ENCODE measurements at regions of chr18 and their contacts with region 1.

Region 1: DNA sequence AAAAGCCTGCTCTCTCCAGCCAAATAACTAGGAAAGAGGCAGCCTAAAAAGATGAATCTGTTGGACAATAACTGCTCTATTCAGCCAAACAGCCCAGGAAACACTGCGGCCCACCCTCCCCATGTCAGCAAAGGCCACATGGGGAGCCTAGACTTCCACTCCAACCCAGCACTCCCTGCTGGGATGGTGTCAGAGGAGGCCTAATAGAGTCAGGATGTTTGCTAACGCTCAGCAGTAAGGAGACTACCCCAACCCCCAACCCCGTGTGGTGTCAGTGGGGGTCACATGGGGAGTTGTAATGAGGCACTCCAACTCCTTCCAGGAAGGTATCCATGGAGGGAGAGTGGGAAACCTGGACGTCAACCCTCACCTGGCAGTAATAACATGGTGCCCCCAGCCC is 41.6 kb downstream of the ZBTB7C start:
- DNase-seq: no peak
- ATAC-seq: no peak
- H3K4me3 ChIP-seq: no peak overlapping the region
- H3K27ac ChIP-seq: no peak overlapping the region
- H3K4me1 ChIP-seq: no peaks in the 10 kb centered on the region
- H3K27me3 ChIP-seq: no peaks in the 10 kb centered on the region

Region 2: DNA sequence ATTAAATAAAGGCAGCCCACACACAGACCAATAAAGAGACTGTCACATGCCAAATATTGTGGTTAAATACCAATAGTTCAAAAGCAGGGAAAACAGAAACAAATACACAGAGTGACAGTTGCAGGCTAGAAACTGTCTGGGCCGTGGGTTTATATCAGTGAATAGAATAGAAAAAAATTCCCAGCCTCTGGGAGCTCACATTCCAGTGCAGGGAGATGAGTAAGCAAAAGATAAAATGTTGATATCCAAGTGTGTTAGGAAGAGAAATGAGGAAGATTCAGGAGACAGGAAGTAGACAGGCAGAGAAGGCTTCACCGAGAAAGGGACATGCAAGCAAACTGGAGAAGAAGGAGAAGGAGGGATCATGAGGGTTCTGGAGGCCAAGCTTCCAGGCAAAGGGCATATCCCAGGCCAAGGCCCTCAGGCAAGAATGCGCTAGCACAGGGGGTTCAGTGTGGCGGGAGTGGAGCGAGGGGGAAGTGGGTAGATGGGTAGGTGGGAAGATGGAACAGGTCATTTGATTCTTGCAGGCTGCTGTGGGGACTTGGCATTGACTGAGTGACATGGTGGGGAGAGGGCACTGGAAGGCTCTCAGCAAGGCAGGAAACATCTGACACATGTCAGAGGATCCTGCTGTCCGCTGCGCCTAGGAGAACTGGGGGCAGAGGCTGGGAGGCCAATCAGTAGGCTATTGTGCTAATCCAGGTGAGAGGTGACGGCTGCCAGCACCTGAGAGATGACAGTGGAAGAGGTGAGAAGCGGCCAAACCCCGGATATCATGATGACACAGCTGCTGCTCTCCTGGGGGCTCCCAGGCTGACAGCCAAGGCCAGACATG is 47.5 kb before region 1 on chr18:
- intact Hi-C with region 1: loop called in 1 of 2 experiments (anchors 10 kb)
- DNase-seq: no peak
- ATAC-seq: no peak
- H3K4me3 ChIP-seq: no peak overlapping the region
- H3K27ac ChIP-seq: no peak overlapping the region
- H3K4me1 ChIP-seq: no peaks in the 10 kb centered on the region
- H3K27me3 ChIP-seq: no peaks in the 10 kb centered on the region